ENCODE measurements at regions of chr3 and their contacts with region 1.

Region 1: GRCh38 chr3:51275111-51275805 is 109.8 kb upstream of the MANF start:
- DNase-seq: no peak
- ATAC-seq: no peak
- H3K4me3 ChIP-seq: no peak overlapping the region
- H3K4me3 Mint-ChIP-seq: peak overlapping the region in 3 of 10 donors; percentile 35 to 61 (median 50)
- H3K27ac ChIP-seq: peak overlapping the region; percentile 6
- H3K27ac Mint-ChIP-seq: peak overlapping the region in 8 of 9 donors; percentile 19 to 87 (median 74)
- H3K4me1 ChIP-seq: peaks cover 6 to 27% of the 10 kb centered on the region in 2 donors
- H3K4me1 Mint-ChIP-seq: peaks cover 10 to 53% (median 40%) of the 10 kb centered on the region in 7 donors
- H3K27me3 ChIP-seq: no peaks in the 10 kb centered on the region
- H3K27me3 Mint-ChIP-seq: no peaks in the 10 kb centered on the region

Region 2: DNA sequence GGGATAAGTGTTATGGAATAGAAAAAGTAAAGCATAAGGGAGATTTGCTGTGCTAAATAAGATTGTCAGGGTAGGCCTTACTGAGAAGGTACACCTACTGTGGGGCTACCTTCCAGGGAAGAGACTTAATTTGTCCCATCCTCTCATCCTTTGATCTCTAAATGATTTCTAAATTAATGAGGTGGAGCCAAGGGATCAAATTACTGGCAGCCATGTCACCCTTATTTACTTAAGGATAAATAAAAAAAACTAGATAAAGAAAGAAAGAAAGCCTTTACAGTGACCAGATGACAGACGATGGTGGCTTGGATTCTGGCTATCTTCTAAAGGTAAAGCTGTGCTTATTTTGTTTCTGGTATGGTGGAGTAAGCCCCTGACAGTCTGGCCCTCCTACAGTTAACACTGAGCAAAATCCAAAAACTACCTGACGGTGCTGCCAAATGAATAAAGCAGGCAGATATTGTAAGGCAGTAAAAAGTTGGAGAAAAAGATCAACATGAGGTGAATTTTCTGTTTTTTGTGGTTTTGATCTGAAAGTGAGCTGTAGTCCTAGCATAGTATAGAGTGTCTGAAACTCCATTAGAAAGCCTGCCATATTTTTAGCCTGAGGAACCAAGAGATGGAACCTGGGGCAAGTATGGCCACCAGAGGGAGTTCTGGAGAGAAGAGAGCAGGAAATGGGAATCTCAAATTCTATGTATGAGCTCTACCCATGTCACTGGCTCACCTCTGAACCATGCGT is 175.3 kb before region 1 on chr3:
- CTCF ChIA-PET with region 1: no interaction called
- POLR2A ChIA-PET with region 1: no interaction called
- intact Hi-C with region 1: loop called in 1 of 2 experiments (anchors 5 kb)
- DNase-seq: peak in 1 of 9 donors; percentile 5
- ATAC-seq: peak; percentile 20
- H3K4me3 ChIP-seq: no peak overlapping the region
- H3K4me3 Mint-ChIP-seq: peak overlapping the region in 1 of 10 donors; percentile 43
- H3K27ac ChIP-seq: no peak overlapping the region
- H3K27ac Mint-ChIP-seq: peak overlapping the region in 3 of 9 donors; percentile 45 to 82 (median 75)
- H3K4me1 ChIP-seq: no peaks in the 10 kb centered on the region
- H3K4me1 Mint-ChIP-seq: peaks cover 3 to 27% (median 16%) of the 10 kb centered on the region in 7 donors
- H3K27me3 ChIP-seq: no peaks in the 10 kb centered on the region
- H3K27me3 Mint-ChIP-seq: peaks cover 0 to 2% (median 0%) of the 10 kb centered on the region in 5 donors

Measured in naive thymus-derived CD4-positive, alpha-beta T cell (primary cell).